Sciatic nerve (tissue), 2 donors: ENCODE measurements at regions of chr2 and their contacts with region 1.

Region 1: GRCh38 chr2:241179899-241180298 is 8.6 kb upstream of the ANO7 start:
- DNase-seq: no peak
- ATAC-seq: no peak

Region 2: GRCh38 chr2:240032406-240033329 is 1147.2 kb before region 1 on chr2:
- intact Hi-C with region 1: loop called (anchors 5 kb)
- DNase-seq: no peak
- ATAC-seq: peak; percentile 28

Region 3: DNA sequence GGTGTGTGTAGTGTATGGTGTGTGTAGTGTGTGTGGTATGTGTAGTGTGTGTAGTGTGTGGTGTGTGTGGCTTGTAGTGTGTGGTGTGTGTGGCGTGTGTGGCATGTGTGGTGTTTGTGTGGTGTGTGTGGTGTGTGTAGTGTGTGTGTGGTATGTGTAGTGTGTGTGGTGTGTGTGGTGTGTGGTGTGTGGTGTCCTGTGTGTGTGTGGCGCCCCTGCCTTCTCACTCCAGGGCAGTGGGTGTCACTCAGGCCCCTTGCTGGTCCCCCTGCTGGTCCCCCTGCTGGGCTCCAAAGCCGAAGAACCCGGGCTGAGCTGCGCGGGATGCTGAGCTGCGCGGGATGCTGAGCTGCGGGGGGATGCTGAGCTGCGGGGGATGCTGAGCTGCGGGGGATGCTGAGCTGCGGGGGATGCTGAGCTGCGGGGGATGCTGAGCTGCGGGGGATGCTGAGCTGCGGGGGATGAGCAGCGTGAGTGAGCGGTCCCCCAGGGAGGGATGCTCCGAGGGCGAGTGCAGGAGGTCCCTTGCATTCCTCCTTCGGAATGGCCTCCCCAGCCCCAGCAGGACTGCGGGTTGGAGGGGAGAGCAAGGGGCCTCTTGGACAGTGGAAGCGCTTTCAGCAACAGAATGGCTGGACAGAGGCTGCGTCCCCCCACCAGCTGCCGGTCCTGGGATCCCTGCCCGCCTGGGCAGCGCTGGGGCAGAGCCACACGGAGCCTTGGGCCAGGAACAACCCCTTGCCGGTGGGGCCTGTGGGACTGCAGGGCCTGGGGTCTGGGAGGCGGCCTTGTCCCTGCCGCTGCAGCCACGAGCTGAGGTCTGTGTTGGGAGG is 686.3 kb after region 1 on chr2:
- intact Hi-C with region 1: no loop called
- DNase-seq: no peak
- ATAC-seq: no peak

Region 4: GRCh38 chr2:241882091-241882625 is 702.3 kb after region 1 on chr2:
- intact Hi-C with region 1: no loop called
- DNase-seq: peak; percentile 84
- ATAC-seq: peak; percentile 66